AG04449 (cell line): ENCODE measurements at regions of chr10 and their contacts with region 1.

Region 1: GRCh38 chr10:63819753-63820329 is 298.6 kb downstream of the REEP3 start:
- DNase-seq: peak; percentile 12
- H3K4me3 ChIP-seq: no peak overlapping the region
- CTCF ChIP-seq: peak; percentile 73

Region 2: GRCh38 chr10:62858364-62858763 is 961.5 kb before region 1 on chr10:
- CTCF ChIA-PET with region 1: no interaction called
- POLR2A ChIA-PET with region 1: no interaction called
- DNase-seq: no peak
- H3K4me3 ChIP-seq: no peak overlapping the region
- CTCF ChIP-seq: no peak

Region 3: DNA sequence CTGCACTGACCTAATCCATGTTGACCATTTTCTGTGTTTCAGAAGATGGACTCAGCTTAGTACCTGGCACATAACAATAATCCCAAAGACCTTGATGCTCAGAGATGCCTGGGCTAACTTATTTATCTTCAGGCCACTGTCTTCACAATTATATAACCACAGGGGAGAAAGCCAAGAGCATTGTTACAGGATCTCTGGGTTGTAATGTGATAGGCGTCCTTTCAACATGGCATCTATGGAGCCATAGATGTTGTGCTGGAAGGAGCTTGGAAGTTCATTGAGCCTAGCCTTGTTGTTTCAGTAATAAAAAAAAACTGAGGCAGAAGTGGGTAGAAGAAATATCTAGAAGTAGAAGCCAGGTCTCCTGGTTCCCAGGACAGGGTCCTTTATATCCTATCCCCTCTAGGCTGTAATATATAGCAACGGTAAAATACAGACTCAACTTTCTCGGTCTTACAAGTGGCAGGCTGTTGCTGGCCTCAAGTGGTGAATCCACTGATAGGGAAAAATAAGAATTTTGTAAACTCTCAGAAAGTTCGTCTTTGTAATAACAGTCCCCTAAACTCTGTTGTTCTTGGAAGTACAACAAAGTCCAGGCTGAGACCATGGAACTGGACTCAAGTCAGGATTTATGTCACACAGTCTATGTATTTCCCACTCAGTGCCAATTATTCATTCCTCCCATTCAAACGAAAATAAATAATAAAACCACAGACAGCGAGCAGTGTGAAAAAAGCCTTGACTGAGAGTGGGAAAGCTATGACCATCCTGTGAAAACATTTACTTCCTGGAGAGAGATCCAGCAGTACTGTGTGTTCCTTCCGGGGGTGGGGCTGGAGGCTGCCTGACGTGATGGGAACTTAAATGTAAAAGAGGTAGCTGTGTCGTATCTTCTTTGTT is 21.0 kb before region 1 on chr10:
- CTCF ChIA-PET with region 1: interaction called, 11 read pairs
- POLR2A ChIA-PET with region 1: no interaction called
- DNase-seq: peak; percentile 83
- H3K4me3 ChIP-seq: no peak overlapping the region
- CTCF ChIP-seq: no peak

Region 4: GRCh38 chr10:63843108-63843507 is 23.3 kb after region 1 on chr10:
- CTCF ChIA-PET with region 1: no interaction called
- POLR2A ChIA-PET with region 1: no interaction called
- DNase-seq: no peak
- H3K4me3 ChIP-seq: no peak overlapping the region
- CTCF ChIP-seq: no peak

Region 5: GRCh38 chr10:64658528-64658927 is 838.7 kb after region 1 on chr10:
- CTCF ChIA-PET with region 1: no interaction called
- POLR2A ChIA-PET with region 1: no interaction called
- DNase-seq: no peak
- H3K4me3 ChIP-seq: no peak overlapping the region
- CTCF ChIP-seq: no peak